MCF 10A (cell line): ENCODE measurements at regions of chr4 and their contacts with region 1.

Region 1: DNA sequence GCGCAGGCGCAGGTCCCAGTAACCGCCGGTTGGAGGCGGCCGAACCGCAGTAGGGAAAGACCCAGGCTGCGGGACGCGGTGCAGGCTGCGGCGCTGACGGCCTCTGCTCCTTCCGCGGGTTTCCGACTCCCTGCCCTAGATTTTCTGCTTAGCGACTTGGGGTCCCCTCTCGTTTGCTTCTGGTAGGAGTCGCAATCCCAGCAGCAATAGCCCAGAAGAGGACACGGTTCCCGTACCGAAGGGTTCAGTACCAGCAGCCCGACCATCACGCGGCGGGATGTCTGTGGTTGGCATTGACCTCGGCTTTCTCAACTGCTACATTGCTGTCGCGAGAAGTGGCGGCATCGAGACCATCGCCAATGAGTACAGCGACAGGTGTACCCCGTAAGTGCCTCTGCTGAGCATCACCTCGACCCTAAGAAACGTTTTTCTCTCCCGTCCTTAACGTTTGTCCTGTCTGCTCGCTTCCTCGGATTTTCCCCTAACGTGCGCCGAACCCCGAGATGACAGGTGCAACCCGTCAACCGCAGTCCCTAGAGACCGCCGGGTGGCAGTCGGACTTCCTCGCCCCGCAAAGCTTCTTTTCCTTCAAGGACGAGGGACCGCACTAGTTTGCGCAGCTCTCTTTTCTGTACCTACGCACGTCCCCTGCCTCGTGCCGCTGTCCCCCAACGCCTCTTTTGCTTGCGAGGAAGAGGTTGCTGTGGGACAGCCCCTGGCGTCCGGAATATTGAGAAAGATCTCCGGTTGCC is at the start of gene HSPA4L:
- DNase-seq: peak; percentile 78
- H3K4me3 Mint-ChIP-seq: peak within 1 kb of the TSS; percentile 82
- H3K27ac Mint-ChIP-seq: peak within 1 kb of the TSS; percentile 96
- H3K4me1 Mint-ChIP-seq: peaks cover 7% of the 10 kb centered on the region
- H3K27me3 Mint-ChIP-seq: no peaks in the 10 kb centered on the region
- CTCF ChIP-seq: peak; percentile 10
- total RNA-seq, gene HSPA4L: 45.9 and 68.9 TPM in 2 replicates

Region 2: GRCh38 chr4:127575888-127576287 is 206.6 kb before region 1 on chr4:
- CTCF ChIA-PET with region 1: no interaction called
- POLR2A ChIA-PET with region 1: no interaction called
- intact Hi-C with region 1: no loop called
- DNase-seq: no peak
- H3K4me3 Mint-ChIP-seq: no peak overlapping the region
- H3K27ac Mint-ChIP-seq: no peak overlapping the region
- H3K4me1 Mint-ChIP-seq: no peaks in the 10 kb centered on the region
- H3K27me3 Mint-ChIP-seq: no peaks in the 10 kb centered on the region
- CTCF ChIP-seq: no peak

Region 3: DNA sequence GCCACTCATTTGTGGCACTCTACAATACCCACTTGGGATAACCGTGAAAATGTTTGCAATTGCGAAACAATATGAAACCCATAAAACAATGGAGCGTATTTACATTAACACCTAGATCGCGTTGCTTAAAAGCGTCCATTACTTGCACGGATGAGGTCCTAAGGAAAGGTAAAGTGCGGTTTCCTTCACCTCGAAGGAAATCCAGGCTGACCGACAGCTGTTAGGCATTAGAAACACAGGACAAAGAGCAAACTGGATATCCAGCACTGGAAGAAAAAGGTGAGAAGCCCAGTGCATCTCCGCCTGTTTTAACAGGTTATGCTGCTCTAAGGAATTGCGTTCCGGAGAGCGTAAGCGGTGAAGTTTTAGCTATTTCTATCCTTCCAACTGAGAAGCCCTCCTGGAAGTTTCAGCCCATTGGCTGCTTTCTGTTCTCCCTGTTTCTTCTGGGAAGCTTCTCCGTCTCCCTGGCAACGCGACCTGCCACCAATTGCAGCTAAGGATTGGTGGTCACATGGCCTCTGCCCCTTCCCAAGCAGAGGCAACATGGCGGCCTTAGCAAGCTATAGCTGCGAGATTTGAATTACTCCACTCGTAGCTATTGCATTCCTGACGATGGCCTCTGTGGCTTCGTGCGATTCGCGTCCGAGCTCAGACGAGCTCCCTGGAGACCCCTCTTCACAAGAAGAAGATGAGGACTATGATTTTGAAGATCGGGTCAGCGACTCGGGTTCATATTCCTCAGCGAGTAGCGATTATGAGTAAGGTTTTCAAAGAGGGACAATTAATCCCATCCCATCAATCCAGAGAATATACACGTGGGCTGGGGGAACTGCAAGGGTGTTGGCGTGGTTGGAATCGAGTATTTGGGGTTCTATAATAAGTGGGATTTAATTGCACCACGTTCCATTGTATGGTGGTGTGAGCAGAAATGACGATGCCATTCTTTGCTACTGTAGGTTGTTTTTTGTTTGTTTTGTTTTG is 149.7 kb before region 1 on chr4 and contains the start of gene INTU:
- CTCF ChIA-PET with region 1: no interaction called
- POLR2A ChIA-PET with region 1: interaction called, 39 read pairs
- intact Hi-C with region 1: no loop called
- DNase-seq: peak; percentile 97
- H3K4me3 Mint-ChIP-seq: peak within 1 kb of the TSS; percentile 96
- H3K27ac Mint-ChIP-seq: peak within 1 kb of the TSS; percentile 97
- H3K4me1 Mint-ChIP-seq: peaks cover 7% of the 10 kb centered on the region
- H3K27me3 Mint-ChIP-seq: no peaks in the 10 kb centered on the region
- CTCF ChIP-seq: no peak
- total RNA-seq, gene INTU: 5.9 and 9.2 TPM in 2 replicates

Region 4: GRCh38 chr4:127708985-127709384 is 73.5 kb before region 1 on chr4:
- CTCF ChIA-PET with region 1: no interaction called
- POLR2A ChIA-PET with region 1: interaction called, 13 read pairs
- intact Hi-C with region 1: no loop called
- DNase-seq: peak; percentile 94
- H3K4me3 Mint-ChIP-seq: peak overlapping the region; percentile 49
- H3K27ac Mint-ChIP-seq: peak overlapping the region; percentile 78
- H3K4me1 Mint-ChIP-seq: peaks cover 15% of the 10 kb centered on the region
- H3K27me3 Mint-ChIP-seq: no peaks in the 10 kb centered on the region
- CTCF ChIP-seq: no peak

Region 5: GRCh38 chr4:127771535-127772275 is 10.7 kb before region 1 on chr4:
- CTCF ChIA-PET with region 1: interaction called, 4 read pairs
- POLR2A ChIA-PET with region 1: interaction called, 31 read pairs
- intact Hi-C with region 1: no loop called
- DNase-seq: no peak
- H3K4me3 Mint-ChIP-seq: no peak overlapping the region
- H3K27ac Mint-ChIP-seq: no peak overlapping the region
- H3K4me1 Mint-ChIP-seq: peaks cover 9% of the 10 kb centered on the region
- H3K27me3 Mint-ChIP-seq: no peaks in the 10 kb centered on the region
- CTCF ChIP-seq: no peak

Region 6: GRCh38 chr4:127798446-127798845 is 16.0 kb after region 1 on chr4:
- CTCF ChIA-PET with region 1: interaction called, 3 read pairs
- POLR2A ChIA-PET with region 1: interaction called, 25 read pairs
- intact Hi-C with region 1: no loop called
- DNase-seq: no peak
- H3K4me3 Mint-ChIP-seq: no peak overlapping the region
- H3K27ac Mint-ChIP-seq: no peak overlapping the region
- H3K4me1 Mint-ChIP-seq: no peaks in the 10 kb centered on the region
- H3K27me3 Mint-ChIP-seq: no peaks in the 10 kb centered on the region
- CTCF ChIP-seq: no peak

Region 7: GRCh38 chr4:127880764-127881562 is 98.5 kb after region 1 on chr4 and contains the start of gene PLK4:
- CTCF ChIA-PET with region 1: no interaction called
- POLR2A ChIA-PET with region 1: interaction called, 37 read pairs
- intact Hi-C with region 1: loop called (anchors 5 kb)
- DNase-seq: peak; percentile 96
- H3K4me3 Mint-ChIP-seq: peak within 1 kb of the TSS; percentile 100
- H3K27ac Mint-ChIP-seq: peak within 1 kb of the TSS; percentile 99
- H3K4me1 Mint-ChIP-seq: peaks cover 18% of the 10 kb centered on the region
- H3K27me3 Mint-ChIP-seq: no peaks in the 10 kb centered on the region
- CTCF ChIP-seq: no peak
- total RNA-seq, gene PLK4: 8.9 and 10.9 TPM in 2 replicates

Region 8: DNA sequence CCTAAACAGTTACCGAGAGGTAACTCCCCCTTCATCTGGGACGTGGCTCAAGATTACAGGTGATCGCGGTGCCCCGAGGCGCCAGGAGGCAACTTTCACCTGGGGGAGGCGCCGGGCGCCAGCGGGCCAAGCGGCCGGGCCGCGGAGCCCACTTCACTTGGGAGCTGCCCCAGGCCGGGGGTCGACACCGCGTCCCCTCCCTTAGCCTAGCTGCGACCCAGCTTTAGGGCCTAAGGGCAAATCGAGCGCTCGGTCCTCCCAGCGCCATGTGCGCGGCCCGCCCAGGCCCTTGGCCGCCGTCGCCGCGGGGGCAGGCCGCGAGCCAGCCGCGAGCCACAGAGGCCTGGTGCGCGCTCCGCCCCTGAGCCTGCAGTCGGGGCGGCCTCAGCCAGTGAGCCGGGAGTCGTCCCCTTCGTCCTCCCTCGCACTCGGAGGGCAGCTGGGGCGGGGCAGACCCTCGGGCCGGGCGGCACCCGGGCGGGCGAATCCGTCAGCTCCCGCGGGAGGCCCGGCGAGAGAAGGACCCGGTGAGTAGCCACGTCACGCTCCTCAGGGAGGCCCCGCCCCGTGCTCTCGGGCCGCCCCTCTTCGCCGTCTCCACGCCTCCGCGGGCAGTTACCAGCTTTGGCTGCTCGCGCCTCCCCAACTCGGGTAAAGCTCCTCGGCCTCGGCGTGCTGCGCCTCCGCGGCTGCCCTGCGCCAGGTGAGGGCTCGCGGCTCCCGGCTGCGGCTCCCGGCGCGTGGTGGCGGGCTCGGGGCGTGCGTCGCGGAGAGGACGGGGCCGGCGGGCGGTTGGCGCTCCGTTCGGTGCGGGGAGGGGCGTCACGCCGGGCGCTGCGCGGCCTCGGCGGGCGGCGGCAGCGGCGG is 278.5 kb after region 1 on chr4 and contains the start of gene LARP1B:
- CTCF ChIA-PET with region 1: no interaction called
- POLR2A ChIA-PET with region 1: interaction called, 17 read pairs
- intact Hi-C with region 1: loop called (anchors 2 kb)
- DNase-seq: peak; percentile 97
- H3K4me3 Mint-ChIP-seq: peak within 1 kb of the TSS; percentile 91
- H3K27ac Mint-ChIP-seq: peak within 1 kb of the TSS; percentile 96
- H3K4me1 Mint-ChIP-seq: peaks cover 6% of the 10 kb centered on the region
- H3K27me3 Mint-ChIP-seq: no peaks in the 10 kb centered on the region
- CTCF ChIP-seq: no peak
- total RNA-seq, gene LARP1B: 56.1 and 62.8 TPM in 2 replicates